Endothelial cell of umbilical vein (primary cell): ENCODE measurements at regions of chr10 and their contacts with region 1.

Region 1: GRCh38 chr10:103712570-103713498 is 142.5 kb downstream of the SH3PXD2A start:
- DNase-seq: peak; percentile 71
- H3K4me3 ChIP-seq: no peak overlapping the region
- H3K27ac ChIP-seq: no peak overlapping the region
- H3K4me1 ChIP-seq: peaks cover 2% of the 10 kb centered on the region
- H3K27me3 ChIP-seq: no peaks in the 10 kb centered on the region
- CTCF ChIP-seq: peak; percentile 78 to 88
- POLR2A ChIP-seq: no peak

Region 2: GRCh38 chr10:103685880-103686669 is 26.8 kb before region 1 on chr10:
- CTCF ChIA-PET with region 1: interaction called, 11 read pairs
- POLR2A ChIA-PET with region 1: no interaction called
- dilution Hi-C with region 1: no loop called
- intact Hi-C with region 1: no loop called
- DNase-seq: peak; percentile 60
- H3K4me3 ChIP-seq: no peak overlapping the region
- H3K27ac ChIP-seq: no peak overlapping the region
- H3K4me1 ChIP-seq: no peaks in the 10 kb centered on the region
- H3K27me3 ChIP-seq: no peaks in the 10 kb centered on the region
- CTCF ChIP-seq: peak; percentile 92 to 96
- POLR2A ChIP-seq: no peak

Region 3: DNA sequence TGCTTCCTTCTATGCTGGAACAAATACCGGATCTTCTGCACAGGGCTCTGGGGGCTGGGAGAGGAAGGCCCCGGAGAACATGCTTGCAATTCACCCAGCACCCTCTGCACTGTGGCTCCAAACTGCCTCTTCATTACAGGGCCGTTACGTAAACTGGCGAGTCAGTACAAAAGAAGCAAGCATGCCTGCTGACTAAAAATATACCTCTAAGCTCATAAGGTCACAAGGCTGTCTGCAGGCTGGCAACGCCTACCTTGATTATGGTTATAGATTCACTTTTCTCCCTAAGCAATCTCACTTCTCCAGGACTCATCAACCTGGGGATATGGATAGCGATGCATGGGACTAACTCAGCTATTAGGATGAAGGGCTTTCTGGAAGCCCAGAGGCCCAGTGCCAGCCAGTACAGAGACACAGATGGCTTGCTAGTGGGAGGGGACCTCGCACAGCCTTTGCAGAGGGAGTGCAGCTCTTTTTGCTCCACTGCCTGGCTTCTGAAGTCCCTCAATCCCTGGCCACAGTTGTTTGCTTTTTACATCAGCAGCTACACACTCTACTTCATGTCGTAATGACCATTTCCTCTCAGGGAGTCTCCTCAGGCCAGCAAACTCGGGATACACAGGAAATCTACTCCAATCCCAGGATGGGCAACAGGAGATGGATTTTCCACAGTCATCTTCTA is 46.4 kb after region 1 on chr10:
- CTCF ChIA-PET with region 1: interaction called, 11 read pairs
- POLR2A ChIA-PET with region 1: no interaction called
- dilution Hi-C with region 1: no loop called
- intact Hi-C with region 1: no loop called
- DNase-seq: peak; percentile 78
- H3K4me3 ChIP-seq: no peak overlapping the region
- H3K27ac ChIP-seq: peak overlapping the region; percentile 59
- H3K4me1 ChIP-seq: peaks cover 60% of the 10 kb centered on the region
- H3K27me3 ChIP-seq: no peaks in the 10 kb centered on the region
- CTCF ChIP-seq: no peak
- POLR2A ChIP-seq: no peak

Region 4: DNA sequence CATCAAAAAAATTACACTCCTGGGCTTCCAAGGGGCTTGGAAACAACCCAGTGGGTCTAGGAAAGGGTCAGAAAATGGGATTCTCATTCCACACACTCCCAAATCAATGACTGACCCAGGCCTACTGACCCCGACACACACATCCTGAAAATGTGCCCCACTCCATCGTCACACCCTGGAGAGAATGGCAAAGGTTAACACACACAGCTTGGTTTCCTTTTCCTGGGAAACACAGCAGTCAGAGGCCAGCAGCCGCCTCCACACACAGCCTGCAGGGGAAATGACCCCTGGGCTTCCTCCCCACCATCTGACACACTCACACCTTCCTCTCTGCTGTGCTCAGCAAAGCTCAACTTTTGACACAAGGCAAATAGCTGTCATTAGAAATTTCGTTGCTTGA is 99.6 kb after region 1 on chr10:
- CTCF ChIA-PET with region 1: interaction called, 7 read pairs
- POLR2A ChIA-PET with region 1: interaction called, 4 read pairs
- dilution Hi-C with region 1: no loop called
- intact Hi-C with region 1: loop called (anchors 1 kb)
- DNase-seq: peak; percentile 92
- H3K4me3 ChIP-seq: no peak overlapping the region
- H3K27ac ChIP-seq: peak overlapping the region; percentile 75
- H3K4me1 ChIP-seq: peaks cover 30% of the 10 kb centered on the region
- H3K27me3 ChIP-seq: no peaks in the 10 kb centered on the region
- CTCF ChIP-seq: no peak
- POLR2A ChIP-seq: peak; percentile 62

Region 5: GRCh38 chr10:103859161-103860086 is 146.6 kb after region 1 on chr10:
- CTCF ChIA-PET with region 1: interaction called, 102 read pairs
- POLR2A ChIA-PET with region 1: no interaction called
- dilution Hi-C with region 1: loop called (anchors 25 kb)
- intact Hi-C with region 1: loop called (anchors 1 kb)
- DNase-seq: peak; percentile 78
- H3K4me3 ChIP-seq: no peak overlapping the region
- H3K27ac ChIP-seq: no peak overlapping the region
- H3K4me1 ChIP-seq: peaks cover 9% of the 10 kb centered on the region
- H3K27me3 ChIP-seq: no peaks in the 10 kb centered on the region
- CTCF ChIP-seq: peak; percentile 64 to 69
- POLR2A ChIP-seq: no peak

Region 6: DNA sequence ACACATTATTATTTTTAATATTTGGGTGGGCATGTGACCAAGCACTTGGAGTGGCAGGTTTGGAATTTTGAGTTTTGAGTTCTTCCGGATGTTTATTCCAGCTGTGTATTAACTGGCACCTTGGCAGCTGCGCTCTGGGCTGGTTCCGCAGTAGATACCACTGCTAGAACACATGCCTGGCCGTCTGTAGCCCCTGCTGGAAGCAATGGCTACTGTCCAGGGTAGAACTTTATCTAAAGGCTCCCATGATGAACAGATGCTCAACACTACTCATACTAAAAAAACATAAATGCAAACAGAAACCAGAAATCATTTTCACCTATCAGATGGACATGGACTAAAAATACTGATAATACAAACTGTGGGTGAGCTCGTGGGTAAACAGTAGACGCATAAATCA is 161.9 kb after region 1 on chr10:
- CTCF ChIA-PET with region 1: interaction called, 17 read pairs
- POLR2A ChIA-PET with region 1: no interaction called
- dilution Hi-C with region 1: loop called (anchors 25 kb)
- intact Hi-C with region 1: no loop called
- DNase-seq: no peak
- H3K4me3 ChIP-seq: no peak overlapping the region
- H3K27ac ChIP-seq: no peak overlapping the region
- H3K4me1 ChIP-seq: no peaks in the 10 kb centered on the region
- H3K27me3 ChIP-seq: no peaks in the 10 kb centered on the region
- CTCF ChIP-seq: no peak
- POLR2A ChIP-seq: no peak